WTC11 (cell line): ENCODE measurements at regions of chr4 and their contacts with region 1.

Region 1: GRCh38 chr4:158782551-158783360 is 13.9 kb downstream of the FNIP2 start:
- DNase-seq: no peak
- ATAC-seq: no peak
- H3K4me3 Mint-ChIP-seq: no peak overlapping the region
- H3K27ac Mint-ChIP-seq: 0 out of 2 replicates have a peak overlapping the region, but pooled peaks have one; percentile 23
- H3K4me1 Mint-ChIP-seq: peaks cover 36% of the 10 kb centered on the region
- H3K27me3 Mint-ChIP-seq: no peaks in the 10 kb centered on the region
- CTCF ChIP-seq: no peak

Region 2: DNA sequence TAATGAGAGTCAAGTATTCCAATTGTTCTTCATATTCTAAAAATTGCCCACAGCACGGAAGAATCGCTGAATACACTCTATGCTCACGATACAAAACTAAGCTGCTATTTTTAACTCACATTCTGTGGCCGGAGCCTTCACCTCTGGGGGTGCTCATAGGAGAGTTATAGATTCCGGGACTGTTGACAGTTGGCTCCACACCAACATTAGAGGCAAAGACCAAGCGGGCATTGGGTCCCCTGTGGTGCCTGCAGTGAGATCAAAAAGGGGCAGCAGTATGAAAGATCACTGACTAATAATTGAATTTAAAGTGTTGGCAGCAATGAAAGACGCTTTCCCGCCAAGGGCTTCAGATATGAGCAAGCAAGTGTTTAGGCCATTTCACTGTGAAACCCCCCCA is 426.5 kb before region 1 on chr4:
- CTCF ChIA-PET with region 1: no interaction called
- POLR2A ChIA-PET with region 1: no interaction called
- DNase-seq: no peak
- ATAC-seq: no peak
- H3K4me3 Mint-ChIP-seq: no peak overlapping the region
- H3K27ac Mint-ChIP-seq: no peak overlapping the region
- H3K4me1 Mint-ChIP-seq: no peaks in the 10 kb centered on the region
- H3K27me3 Mint-ChIP-seq: no peaks in the 10 kb centered on the region
- CTCF ChIP-seq: no peak

Region 3: DNA sequence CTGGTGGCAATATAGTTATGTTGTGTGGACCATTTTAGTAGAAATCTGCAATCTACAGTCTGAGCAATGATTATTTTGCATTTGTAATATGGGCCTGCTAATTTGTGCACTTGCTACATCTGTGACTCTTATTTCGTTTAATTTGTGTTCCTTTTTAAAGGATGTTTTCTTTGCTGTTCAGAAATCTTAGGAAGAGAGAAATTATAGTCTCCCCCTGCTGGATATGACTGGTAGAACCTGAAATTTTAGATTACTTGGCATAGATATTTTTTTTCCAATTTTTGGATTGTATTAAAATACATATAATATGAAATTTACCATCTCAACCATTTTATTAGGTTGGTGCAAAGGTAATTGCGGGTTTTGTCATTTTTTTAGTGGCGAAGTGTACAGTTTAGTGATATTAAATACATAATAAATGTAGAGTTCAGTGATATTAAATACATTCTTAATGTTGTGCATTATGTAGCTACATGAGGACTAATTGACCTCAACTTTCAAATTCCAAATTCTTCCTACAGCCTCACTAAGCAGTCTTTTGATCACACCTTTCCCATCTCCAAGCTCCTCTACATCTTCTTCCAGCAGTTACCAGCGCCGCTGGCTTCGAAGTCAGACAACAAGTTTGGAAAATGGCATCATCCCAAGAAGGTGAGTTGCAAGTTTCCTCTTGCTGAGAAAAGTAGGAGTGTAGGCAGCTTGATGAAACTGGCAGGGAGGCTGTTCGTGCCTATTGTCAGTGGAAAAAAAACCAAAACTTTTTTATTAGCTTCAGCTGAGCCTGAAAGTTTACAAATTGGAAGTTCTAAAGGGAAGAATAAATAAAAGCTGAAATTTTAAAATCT is 68.3 kb after region 1 on chr4:
- CTCF ChIA-PET with region 1: interaction called, 10 read pairs
- POLR2A ChIA-PET with region 1: no interaction called
- DNase-seq: no peak
- ATAC-seq: no peak
- H3K4me3 Mint-ChIP-seq: no peak overlapping the region
- H3K27ac Mint-ChIP-seq: no peak overlapping the region
- H3K4me1 Mint-ChIP-seq: peaks cover 18% of the 10 kb centered on the region
- H3K27me3 Mint-ChIP-seq: no peaks in the 10 kb centered on the region
- CTCF ChIP-seq: peak; percentile 42